Astrocyte of the spinal cord (primary cell): ENCODE measurements at regions of chr5 and their contacts with region 1.

Region 1: GRCh38 chr5:5421961-5422818 is at the start of gene ICE1:
- DNase-seq: peak; percentile 98
- H3K4me3 ChIP-seq: peak within 1 kb of the TSS; percentile 95
- CTCF ChIP-seq: no peak

Region 2: GRCh38 chr5:4879693-4880303 is 542.4 kb before region 1 on chr5:
- in situ Hi-C with region 1: loop called (anchors 25 kb)
- DNase-seq: peak; percentile 79
- H3K4me3 ChIP-seq: no peak overlapping the region
- CTCF ChIP-seq: peak; percentile 98

Region 3: GRCh38 chr5:5965132-5965531 is 542.9 kb after region 1 on chr5:
- in situ Hi-C with region 1: no loop called
- DNase-seq: no peak
- H3K4me3 ChIP-seq: no peak overlapping the region
- CTCF ChIP-seq: no peak